ENCODE measurements at regions of chr20 and their contacts with region 1.

Region 1: DNA sequence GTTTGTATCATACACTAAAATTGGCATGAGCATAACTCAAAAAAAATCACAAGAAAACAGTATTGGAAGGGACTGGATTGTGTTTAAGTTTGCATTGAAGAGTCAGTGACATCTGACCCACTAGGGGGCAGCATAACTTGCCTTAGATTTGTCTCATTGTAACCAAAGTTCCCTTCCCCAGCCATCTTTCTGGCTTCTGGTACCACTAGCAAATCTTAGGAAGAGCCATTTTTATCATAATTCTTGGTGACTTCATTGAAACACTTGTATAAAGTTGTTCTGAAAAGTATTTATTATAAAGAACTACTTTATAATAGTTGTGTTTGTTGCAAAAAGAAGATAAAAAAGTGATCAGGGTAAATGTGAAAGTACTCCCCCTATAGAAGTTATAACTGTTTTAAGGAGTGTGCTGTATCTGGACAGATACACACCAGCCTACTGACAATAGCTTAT is 7.7 kb downstream of the CSTF1 start:
- DNase-seq: peak; percentile 90
- H3K4me3 Mint-ChIP-seq: no peak overlapping the region
- H3K27ac Mint-ChIP-seq: no peak overlapping the region
- H3K4me1 Mint-ChIP-seq: peaks cover 16% of the 10 kb centered on the region
- H3K27me3 Mint-ChIP-seq: no peaks in the 10 kb centered on the region

Region 2: DNA sequence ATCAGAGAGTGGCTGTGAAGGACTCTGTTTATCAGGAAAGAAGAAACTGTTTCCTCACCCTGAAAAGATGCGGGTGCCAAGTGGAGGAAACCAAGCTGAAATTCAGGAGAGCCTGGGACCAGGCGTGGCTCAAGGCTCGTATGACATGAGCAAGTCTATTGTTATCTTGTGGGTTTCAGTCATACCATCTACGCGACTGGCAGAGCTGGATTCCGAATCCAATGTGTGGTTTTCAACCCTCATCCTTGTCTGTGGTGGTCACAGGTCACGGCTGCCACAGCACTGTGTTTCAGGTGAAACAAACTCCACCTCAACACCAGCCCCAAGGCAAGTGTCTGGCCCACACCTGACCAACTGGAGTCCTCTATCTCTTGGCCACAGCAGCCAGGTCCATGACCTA is 142.5 kb before region 1 on chr20:
- intact Hi-C with region 1: no loop called
- DNase-seq: no peak
- H3K4me3 Mint-ChIP-seq: no peak overlapping the region
- H3K27ac Mint-ChIP-seq: no peak overlapping the region
- H3K4me1 Mint-ChIP-seq: no peaks in the 10 kb centered on the region
- H3K27me3 Mint-ChIP-seq: no peaks in the 10 kb centered on the region

Region 3: DNA sequence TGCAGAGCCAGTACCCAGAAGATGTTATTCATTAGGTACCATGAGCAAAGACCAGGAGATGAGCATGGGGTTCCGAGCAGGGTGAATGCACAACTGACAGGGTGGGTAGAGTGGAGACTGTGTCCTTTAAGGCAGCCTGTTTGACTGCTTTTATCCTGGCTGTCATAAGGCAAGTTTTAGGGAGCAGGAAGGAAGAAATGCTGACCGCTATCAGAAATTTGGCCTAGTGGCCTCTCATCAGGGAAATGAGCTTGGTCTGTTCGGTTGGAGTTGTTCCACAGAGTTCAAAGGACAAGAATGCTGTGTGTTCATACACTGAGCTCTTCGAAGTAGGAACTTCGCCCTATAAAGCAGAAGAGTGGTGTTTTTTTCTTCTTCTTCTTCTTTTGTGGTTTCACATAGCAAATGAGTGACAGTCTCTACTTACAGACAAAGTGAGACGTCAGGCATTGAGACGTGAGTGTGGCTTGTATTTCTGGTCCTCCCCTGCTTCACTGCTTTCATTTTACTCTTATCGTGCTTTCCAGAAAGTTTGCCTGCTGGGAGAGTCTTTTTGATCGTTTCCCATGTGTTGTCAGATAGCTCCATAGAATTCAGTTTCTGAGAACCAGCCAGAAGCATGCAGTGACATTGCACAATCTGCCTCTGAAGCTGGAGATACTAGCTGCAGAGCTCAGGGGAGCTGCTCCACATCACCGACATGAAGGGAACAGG is 11.8 kb after region 1 on chr20 and contains the start of gene CASS4:
- intact Hi-C with region 1: loop called (anchors 1 kb)
- DNase-seq: peak; percentile 80
- H3K4me3 Mint-ChIP-seq: peak within 1 kb of the TSS; percentile 74
- H3K27ac Mint-ChIP-seq: peak within 1 kb of the TSS; percentile 94
- H3K4me1 Mint-ChIP-seq: peaks cover 41% of the 10 kb centered on the region
- H3K27me3 Mint-ChIP-seq: no peaks in the 10 kb centered on the region
- total RNA-seq, gene CASS4: 2.8 and 3.1 TPM in 2 replicates

Region 4: DNA sequence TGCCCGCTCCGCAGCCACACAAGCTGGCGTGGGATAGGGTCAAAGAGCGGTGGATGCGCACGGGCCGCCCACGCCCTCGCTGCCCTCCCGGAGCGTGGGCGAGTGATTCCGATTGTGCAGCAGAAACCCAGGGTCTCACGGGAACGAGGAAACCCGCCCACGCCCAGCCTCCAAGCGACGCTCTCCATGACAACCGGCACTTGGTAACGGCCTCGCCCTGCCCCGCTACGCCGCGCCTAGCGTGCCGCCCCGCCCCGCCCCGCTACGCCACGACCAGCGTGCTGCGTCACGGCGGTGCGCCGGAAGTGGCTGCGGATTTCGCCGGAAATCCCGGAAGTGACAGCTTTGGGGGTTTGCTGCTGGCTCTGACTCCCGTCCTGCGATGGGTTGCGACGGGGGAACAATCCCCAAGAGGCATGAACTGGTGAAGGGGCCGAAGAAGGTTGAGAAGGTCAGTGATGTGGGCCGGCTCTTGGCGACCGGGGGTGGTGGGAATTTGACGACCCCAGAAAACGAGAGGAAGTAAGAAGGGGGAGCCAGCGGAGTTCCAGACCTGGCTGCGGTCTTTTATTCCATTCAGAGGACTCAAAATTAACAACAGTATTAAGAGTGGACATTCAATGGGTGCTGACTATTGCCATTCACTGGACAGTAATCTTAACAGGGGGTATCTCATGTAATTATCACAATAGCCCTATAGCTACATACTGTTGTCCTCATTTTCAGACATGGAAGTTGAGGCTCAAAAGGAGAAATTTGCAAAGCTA is 68.4 kb after region 1 on chr20 and contains the start of gene RTF2:
- intact Hi-C with region 1: loop called (anchors 2 kb)
- DNase-seq: peak; percentile 100
- H3K4me3 Mint-ChIP-seq: peak within 1 kb of the TSS; percentile 98
- H3K27ac Mint-ChIP-seq: peak within 1 kb of the TSS; percentile 99
- H3K4me1 Mint-ChIP-seq: peaks cover 37% of the 10 kb centered on the region
- H3K27me3 Mint-ChIP-seq: peaks cover 2% of the 10 kb centered on the region
- total RNA-seq, gene RTF2: 92.3 and 96.5 TPM in 2 replicates

Region 5: GRCh38 chr20:56504373-56505005 is 104.4 kb after region 1 on chr20:
- intact Hi-C with region 1: loop called (anchors 1 kb)
- DNase-seq: peak; percentile 73
- H3K4me3 Mint-ChIP-seq: no peak overlapping the region
- H3K27ac Mint-ChIP-seq: no peak overlapping the region
- H3K4me1 Mint-ChIP-seq: peaks cover 8% of the 10 kb centered on the region
- H3K27me3 Mint-ChIP-seq: no peaks in the 10 kb centered on the region

Region 6: DNA sequence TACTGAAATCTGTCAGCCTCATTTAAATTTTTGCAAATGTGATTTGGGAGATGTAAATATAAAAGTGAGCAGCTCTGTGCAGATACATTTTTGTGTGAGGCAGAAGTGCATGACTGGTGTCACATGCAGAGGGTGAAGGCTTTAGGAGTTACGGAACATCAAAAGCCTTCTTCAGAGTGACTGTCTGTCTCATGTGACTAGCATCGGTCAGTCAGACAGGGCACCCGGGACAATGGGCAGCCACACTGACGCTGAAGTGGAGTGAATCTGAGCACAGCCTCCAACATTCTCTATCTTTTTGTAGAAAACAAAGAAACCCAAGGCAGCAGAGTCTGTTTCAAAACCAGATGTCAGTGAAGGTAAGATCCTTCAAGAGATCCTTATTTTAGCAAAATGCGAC is 116.5 kb after region 1 on chr20:
- intact Hi-C with region 1: loop called (anchors 1 kb)
- DNase-seq: no peak
- H3K4me3 Mint-ChIP-seq: no peak overlapping the region
- H3K27ac Mint-ChIP-seq: no peak overlapping the region
- H3K4me1 Mint-ChIP-seq: no peaks in the 10 kb centered on the region
- H3K27me3 Mint-ChIP-seq: no peaks in the 10 kb centered on the region

Region 7: DNA sequence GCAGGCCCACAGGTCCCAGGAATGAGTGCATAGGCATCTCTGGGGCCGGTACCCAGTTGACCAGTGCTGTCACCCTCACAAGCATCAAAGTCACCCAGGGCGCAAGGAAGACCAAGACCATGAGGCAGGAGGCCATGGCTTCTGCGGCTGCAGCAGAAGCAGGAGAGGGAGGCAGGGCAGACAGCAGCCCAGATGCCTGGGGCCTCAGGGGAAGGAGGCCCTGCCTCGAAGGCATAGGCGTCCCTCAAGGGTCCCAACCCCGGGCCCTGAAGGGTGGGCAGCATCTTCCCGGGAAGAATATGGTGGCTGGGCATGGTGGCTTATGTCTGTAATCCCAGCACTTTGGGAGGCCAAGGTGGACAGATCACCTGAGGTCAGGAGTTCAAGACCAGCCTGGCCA is 127.4 kb after region 1 on chr20:
- intact Hi-C with region 1: no loop called
- DNase-seq: no peak
- H3K4me3 Mint-ChIP-seq: no peak overlapping the region
- H3K27ac Mint-ChIP-seq: no peak overlapping the region
- H3K4me1 Mint-ChIP-seq: peaks cover 5% of the 10 kb centered on the region
- H3K27me3 Mint-ChIP-seq: no peaks in the 10 kb centered on the region

Measured in activated CD4-positive, alpha-beta T cell treated with anti-CD3 and anti-CD28 coated beads, Interleukin-2, amount 10 ng/mL, durations not matched to agents 24 days and 14 days (primary cell).